Endothelial cell of umbilical vein (primary cell): ENCODE measurements at regions of chr5 and their contacts with region 1.

Region 1: GRCh38 chr5:104412649-104413246 is 850.2 kb upstream of the NUDT12 start:
- DNase-seq: peak; percentile 26
- H3K4me3 ChIP-seq: no peak overlapping the region
- H3K27ac ChIP-seq: no peak overlapping the region
- H3K4me1 ChIP-seq: no peaks in the 10 kb centered on the region
- H3K27me3 ChIP-seq: no peaks in the 10 kb centered on the region
- CTCF ChIP-seq: peak; percentile 33 to 44
- POLR2A ChIP-seq: no peak

Region 2: DNA sequence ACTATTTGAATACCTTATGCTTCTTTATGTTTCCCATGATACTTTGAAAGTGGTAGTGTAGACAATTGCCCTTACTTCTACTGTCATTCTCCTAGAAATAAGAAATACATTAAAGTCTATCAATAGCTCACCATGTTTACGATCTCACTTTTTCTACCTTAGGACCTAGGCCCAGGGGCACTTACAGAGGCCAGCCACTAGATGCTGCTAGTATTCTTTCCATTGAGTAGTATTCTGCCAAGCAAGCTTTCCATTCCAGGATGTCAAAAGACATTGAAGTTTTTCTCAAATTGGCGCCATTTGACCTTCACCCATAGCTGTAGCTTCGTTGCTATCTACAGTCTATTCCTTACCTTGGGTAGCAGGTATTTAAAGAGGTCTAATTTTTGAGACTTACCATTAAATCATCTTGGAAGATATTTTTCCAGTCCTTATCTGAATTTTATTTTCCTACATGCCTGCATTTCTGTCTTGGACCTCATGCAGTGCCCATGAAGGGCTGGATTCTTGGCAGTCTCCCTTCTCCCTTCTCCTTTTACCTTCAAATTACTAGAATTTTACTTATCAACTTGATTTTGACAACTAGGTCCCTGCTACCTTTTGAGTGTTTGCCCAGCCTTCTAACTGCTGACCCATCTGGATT is 604.2 kb before region 1 on chr5:
- CTCF ChIA-PET with region 1: interaction called, 26 read pairs
- POLR2A ChIA-PET with region 1: no interaction called
- dilution Hi-C with region 1: no loop called
- intact Hi-C with region 1: no loop called
- DNase-seq: peak; percentile 48
- H3K4me3 ChIP-seq: no peak overlapping the region
- H3K27ac ChIP-seq: no peak overlapping the region
- H3K4me1 ChIP-seq: no peaks in the 10 kb centered on the region
- H3K27me3 ChIP-seq: no peaks in the 10 kb centered on the region
- CTCF ChIP-seq: peak; percentile 73
- POLR2A ChIP-seq: no peak

Region 3: DNA sequence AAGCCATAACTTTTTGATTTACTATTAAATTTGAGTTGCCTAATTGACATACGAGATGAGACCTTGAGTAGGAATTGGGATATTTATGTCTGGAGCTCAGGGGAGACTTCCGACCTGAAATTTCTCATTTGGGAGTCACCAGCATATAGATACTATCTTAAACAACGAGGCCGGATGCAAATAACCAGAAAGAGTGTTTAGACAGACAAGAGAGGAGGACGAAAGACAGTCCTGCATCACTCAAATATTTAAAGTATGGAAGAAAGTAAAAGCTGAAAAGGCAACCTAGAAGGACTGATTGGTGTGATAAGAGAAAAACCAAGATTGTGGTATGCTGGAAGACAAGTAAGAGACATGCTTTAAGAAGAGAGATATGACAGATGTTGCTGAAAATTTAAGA is 175.2 kb before region 1 on chr5:
- CTCF ChIA-PET with region 1: no interaction called
- POLR2A ChIA-PET with region 1: no interaction called
- dilution Hi-C with region 1: no loop called
- intact Hi-C with region 1: no loop called
- DNase-seq: no peak
- H3K4me3 ChIP-seq: no peak overlapping the region
- H3K27ac ChIP-seq: no peak overlapping the region
- H3K4me1 ChIP-seq: no peaks in the 10 kb centered on the region
- H3K27me3 ChIP-seq: no peaks in the 10 kb centered on the region
- CTCF ChIP-seq: no peak
- POLR2A ChIP-seq: no peak

Region 4: GRCh38 chr5:104347119-104347708 is 65.5 kb before region 1 on chr5:
- CTCF ChIA-PET with region 1: interaction called, 48 read pairs
- POLR2A ChIA-PET with region 1: no interaction called
- dilution Hi-C with region 1: no loop called
- intact Hi-C with region 1: no loop called
- DNase-seq: peak; percentile 59
- H3K4me3 ChIP-seq: no peak overlapping the region
- H3K27ac ChIP-seq: no peak overlapping the region
- H3K4me1 ChIP-seq: peaks cover 5% of the 10 kb centered on the region
- H3K27me3 ChIP-seq: no peaks in the 10 kb centered on the region
- CTCF ChIP-seq: peak in 1 of 2 donors; percentile 21
- POLR2A ChIP-seq: no peak

Region 5: DNA sequence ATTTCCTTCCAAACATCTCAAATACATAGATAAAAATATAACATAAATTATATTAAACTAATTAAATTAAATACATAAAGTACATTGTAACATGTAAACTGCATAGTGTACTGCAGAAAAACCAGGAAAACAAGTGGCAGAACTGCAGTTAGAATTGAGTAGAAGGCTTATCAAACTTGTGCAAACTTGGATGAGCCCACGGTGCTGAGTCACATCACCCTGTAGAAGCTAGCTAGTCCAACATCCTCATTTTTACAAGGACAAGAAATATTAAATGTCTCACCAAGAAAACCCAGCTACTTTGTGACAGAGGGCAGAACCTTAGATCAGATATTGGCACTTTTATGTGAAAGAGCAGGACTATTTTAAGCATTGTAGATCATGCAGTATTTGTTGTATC is 42.2 kb before region 1 on chr5:
- CTCF ChIA-PET with region 1: interaction called, 4 read pairs
- POLR2A ChIA-PET with region 1: no interaction called
- dilution Hi-C with region 1: no loop called
- intact Hi-C with region 1: loop called (anchors 1 kb)
- DNase-seq: peak; percentile 16
- H3K4me3 ChIP-seq: no peak overlapping the region
- H3K27ac ChIP-seq: no peak overlapping the region
- H3K4me1 ChIP-seq: no peaks in the 10 kb centered on the region
- H3K27me3 ChIP-seq: no peaks in the 10 kb centered on the region
- CTCF ChIP-seq: no peak
- POLR2A ChIP-seq: no peak

Region 6: DNA sequence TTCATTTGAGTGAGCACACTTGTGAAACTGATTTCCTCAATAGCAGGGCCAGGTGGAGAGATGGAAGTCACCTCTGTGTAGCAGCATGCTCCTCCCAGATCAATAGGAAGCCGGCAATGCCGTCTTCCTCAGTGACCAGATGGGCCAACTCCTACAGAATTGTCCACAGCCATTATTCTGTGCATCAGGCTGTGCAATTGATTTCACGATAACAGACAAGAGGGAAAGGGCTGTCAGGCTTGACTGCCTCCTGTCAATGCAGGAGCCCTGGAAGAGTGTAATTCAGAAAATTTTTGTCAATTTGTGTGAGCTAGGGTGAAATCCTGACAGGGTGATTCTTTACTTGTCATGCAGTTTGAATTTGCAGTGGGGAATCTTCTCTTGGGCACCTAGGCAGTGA is 11.8 kb before region 1 on chr5:
- CTCF ChIA-PET with region 1: interaction called, 24 read pairs
- POLR2A ChIA-PET with region 1: no interaction called
- dilution Hi-C with region 1: no loop called
- intact Hi-C with region 1: no loop called
- DNase-seq: no peak
- H3K4me3 ChIP-seq: no peak overlapping the region
- H3K27ac ChIP-seq: no peak overlapping the region
- H3K4me1 ChIP-seq: no peaks in the 10 kb centered on the region
- H3K27me3 ChIP-seq: no peaks in the 10 kb centered on the region
- CTCF ChIP-seq: no peak
- POLR2A ChIP-seq: no peak

Region 7: GRCh38 chr5:105688227-105688792 is 1275.6 kb after region 1 on chr5:
- CTCF ChIA-PET with region 1: no interaction called
- POLR2A ChIA-PET with region 1: no interaction called
- dilution Hi-C with region 1: no loop called
- intact Hi-C with region 1: no loop called
- DNase-seq: no peak
- H3K4me3 ChIP-seq: no peak overlapping the region
- H3K27ac ChIP-seq: no peak overlapping the region
- H3K4me1 ChIP-seq: no peaks in the 10 kb centered on the region
- H3K27me3 ChIP-seq: no peaks in the 10 kb centered on the region
- CTCF ChIP-seq: no peak
- POLR2A ChIP-seq: no peak